ENCODE measurements at regions of chr13 and their contacts with region 1.

Region 1: DNA sequence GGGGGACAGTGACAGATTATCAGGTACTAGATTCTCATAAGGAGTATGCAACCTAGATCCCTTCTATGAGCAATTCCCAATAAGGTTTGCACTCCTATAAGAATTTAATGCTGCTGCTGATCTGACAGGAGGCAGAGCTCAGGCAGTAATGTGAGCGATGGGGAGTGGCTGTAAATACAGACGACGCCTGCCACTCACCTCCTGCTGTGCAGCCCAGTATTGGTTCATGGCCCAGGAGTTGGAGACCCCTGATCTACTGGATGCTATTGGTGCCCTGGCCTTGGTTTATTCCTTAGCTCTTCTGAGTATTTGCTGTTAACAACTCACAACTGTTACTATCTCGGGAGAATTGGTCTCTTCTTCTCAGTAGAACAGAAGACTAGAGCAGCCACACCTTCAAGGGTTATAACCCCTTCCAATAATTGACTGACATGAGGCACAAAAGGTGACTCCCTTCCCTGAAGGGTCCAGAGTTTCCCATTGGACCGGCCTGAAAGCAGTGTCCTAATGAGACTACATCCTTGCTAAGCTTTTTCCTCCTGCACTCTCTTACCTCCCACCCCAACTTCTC is 35.0 kb upstream of the RBM26 start:
- DNase-seq: no peak
- H3K4me3 ChIP-seq: no peak overlapping the region
- CTCF ChIP-seq: no peak

Region 2: DNA sequence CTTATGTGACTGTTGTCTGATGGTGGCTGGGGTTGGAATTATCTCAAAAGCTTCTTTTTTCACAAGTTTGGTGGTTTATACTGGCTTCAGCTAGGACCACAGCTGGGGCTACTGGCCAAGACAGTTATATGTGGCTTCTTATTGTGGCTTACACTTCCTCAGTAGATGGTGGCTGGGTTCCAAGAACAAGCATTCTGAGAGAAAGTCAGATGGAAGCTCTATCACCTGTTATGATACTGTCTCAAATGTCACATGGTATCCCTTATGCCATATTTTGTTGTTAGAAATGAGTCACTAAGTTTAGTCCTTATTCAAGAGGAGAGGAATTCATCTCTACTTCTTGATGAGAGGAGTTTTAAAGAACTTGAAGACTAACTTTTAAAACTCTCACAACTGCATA is 81.5 kb after region 1 on chr13:
- in situ Hi-C with region 1: loop called (anchors 5 kb)
- DNase-seq: peak; percentile 97
- H3K4me3 ChIP-seq: no peak overlapping the region
- CTCF ChIP-seq: no peak